Pancreas (tissue), 10 donors: ENCODE measurements at regions of chr1 and their contacts with region 1.

Region 1: GRCh38 chr1:230642263-230642959 is at the start of gene COG2:
- DNase-seq: peak; percentile 90 to 100 (median 96)
- ATAC-seq: peak; percentile 97 to 99 (median 98)
- H3K4me3 ChIP-seq: peak within 1 kb of the TSS; percentile 66 to 89 (median 80)
- H3K27ac ChIP-seq: peak within 1 kb of the TSS; percentile 70 to 89 (median 75)
- H3K4me1 ChIP-seq: peaks cover 5 to 18% (median 7%) of the 10 kb centered on the region in 3 donors
- H3K27me3 ChIP-seq: no peaks in the 10 kb centered on the region
- CTCF ChIP-seq: peak; percentile 100
- total RNA-seq, gene COG2: 12.7 to 17.1 (median 16.0) TPM

Region 2: GRCh38 chr1:230382060-230382491 is 260.3 kb before region 1 on chr1:
- intact Hi-C with region 1: no loop called
- DNase-seq: peak in 3 of 6 donors; percentile 21 to 50 (median 28)
- ATAC-seq: peak; percentile 58 to 78 (median 70)
- H3K4me3 ChIP-seq: no peak overlapping the region
- H3K27ac ChIP-seq: peak overlapping the region; percentile 2 to 79 (median 70)
- H3K4me1 ChIP-seq: peaks cover 4 to 14% (median 10%) of the 10 kb centered on the region in 3 donors
- H3K27me3 ChIP-seq: no peaks in the 10 kb centered on the region
- CTCF ChIP-seq: no peak

Region 3: DNA sequence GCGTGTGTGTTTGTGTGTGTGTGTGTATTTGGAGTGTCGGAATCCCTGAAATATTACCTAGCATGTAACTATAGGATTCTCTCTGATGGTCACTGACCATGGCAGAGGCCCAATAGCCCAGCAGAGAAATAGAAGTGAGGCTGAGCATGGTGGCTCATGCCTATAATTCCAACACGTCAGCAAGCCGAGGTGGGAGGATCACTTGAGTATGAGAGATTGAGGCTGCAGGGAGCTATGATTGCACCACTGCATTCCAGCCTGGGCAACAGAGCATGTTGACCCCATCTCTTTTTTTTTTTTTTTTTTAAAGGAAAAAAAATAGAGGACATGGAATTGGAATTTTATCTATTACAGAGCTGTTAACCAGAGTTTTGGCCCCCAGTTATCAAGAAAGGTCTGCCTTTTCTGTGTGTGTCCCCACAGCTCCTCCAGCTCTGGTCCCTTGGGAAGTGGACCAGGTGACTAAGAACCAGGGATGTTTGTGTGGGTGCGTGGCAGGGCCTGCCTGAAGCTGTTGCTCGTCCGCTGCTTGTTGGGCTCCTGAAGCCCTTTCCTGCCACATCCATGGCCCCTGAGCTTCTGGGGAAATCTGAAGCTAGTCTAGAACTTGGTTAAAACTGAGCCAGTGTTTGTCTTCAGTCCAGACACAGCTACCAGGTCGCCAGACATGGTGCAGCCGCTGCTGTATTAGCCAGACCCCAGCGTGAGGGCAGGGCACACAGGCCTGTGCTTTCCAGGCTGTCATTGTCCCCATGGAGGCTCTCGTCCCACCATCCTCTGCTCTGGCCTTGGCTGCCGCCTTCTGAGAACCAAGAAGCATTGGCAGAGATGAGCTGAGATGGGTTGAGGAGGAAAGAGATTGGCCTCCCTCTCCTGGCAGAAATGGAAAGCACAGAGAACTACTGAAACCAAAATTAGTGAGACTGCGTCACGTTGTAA is 130.3 kb after region 1 on chr1:
- intact Hi-C with region 1: loop called in 1 of 3 experiments (anchors 5 kb)
- DNase-seq: peak in 4 of 6 donors; percentile 13 to 41 (median 35)
- ATAC-seq: peak; percentile 53 to 86 (median 82)
- H3K4me3 ChIP-seq: no peak overlapping the region
- H3K27ac ChIP-seq: no peak overlapping the region
- H3K4me1 ChIP-seq: peaks cover 0 to 10% (median 3%) of the 10 kb centered on the region in 3 donors
- H3K27me3 ChIP-seq: no peaks in the 10 kb centered on the region
- CTCF ChIP-seq: peak in 2 of 4 donors; percentile 34 to 37